ENCODE measurements at regions of chr1 and their contacts with region 1.

Region 1: GRCh38 chr1:43836267-43836951 is 97.2 kb upstream of the ARTN start:
- ATAC-seq: peak; percentile 40 to 95 (median 78)
- H3K4me3 ChIP-seq: no peak overlapping the region
- H3K27ac ChIP-seq: no peak overlapping the region
- H3K4me1 ChIP-seq: peaks cover 0 to 9% of the 10 kb centered on the region in 2 donors

Region 2: DNA sequence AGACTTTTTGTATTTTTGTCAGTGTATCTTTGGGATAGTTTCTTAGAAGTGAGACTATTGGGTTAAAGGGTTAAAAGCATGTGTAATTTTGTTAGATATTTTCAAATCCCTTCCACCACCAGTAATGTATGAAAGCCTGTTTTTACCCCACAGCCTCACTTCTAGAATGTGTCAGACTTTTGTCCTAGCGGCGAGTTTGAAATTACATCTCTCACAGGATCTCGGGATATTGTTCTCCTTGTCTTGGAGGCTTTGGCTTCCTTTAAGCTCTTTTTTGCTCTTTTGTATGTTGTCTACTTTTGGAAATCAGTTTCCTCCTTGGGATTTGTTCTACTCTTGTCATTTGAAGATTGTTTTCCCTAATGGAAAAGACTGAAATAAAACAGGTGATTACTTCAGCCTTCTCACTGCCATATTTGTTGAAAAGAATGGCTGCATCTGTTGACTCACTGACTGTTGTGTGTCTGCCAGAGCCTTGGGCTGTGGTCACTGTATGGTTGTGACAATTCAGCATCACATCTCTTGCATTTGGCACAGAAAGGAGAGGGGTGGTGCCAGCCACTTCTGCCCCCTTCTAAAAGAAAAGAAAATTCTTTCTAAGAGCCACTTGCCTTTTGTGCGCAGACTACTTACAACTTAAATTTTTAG is 106.5 kb before region 1 on chr1:
- in situ Hi-C with region 1: loop called in 1 of 9 experiments (anchors 25 kb)
- ATAC-seq: peak in 3 of 8 experiments; percentile 29 to 45 (median 31)
- H3K4me3 ChIP-seq: no peak overlapping the region
- H3K27ac ChIP-seq: no peak overlapping the region
- H3K4me1 ChIP-seq: peaks cover 0 to 3% of the 10 kb centered on the region in 2 donors